ENCODE measurements at regions of chr17 and their contacts with region 1.

Region 1: DNA sequence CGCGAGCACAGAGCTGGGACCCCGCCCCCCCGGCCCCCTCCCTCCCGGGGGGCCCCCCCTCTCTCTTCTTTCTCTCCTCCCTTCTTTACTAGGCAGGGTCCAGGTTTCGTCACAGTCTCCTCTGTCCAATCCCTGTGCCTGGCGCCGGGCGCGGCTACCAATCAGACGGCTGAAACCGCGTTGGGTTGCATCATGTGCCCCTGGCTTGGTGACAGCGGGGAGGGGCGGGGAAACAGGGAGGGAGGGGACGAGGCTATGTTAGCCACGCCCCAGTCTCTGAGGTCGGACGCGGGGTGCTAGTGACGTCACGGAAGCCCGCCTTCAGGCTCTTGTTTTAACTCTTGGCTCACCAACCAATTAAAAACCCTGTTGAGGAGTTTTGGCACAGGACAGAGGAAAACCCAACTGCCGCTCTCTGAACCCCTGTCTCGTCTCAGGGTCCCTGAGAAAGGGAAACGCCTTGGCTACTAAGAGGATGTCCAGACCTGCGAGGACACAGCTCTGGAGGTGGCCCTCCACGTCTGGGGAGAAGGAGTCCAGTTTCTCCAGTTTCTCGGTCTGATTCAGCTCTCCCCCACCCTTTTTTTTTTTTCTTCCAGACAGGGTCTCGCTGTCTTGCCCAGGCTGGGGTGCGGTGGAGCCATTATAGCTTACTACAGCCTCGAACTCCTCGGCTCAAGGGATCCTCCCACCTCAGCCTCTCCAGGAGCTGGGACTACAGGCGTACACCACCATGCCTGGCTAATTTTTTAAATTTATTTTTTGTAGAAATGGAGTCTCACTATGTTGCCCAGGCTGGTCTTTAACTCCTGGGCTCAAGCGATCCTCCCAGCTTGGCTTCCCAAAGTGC is 439 bp upstream of the PLEKHH3 start:
- DNase-seq: peak; percentile 100
- ATAC-seq: peak; percentile 68
- H3K4me3 Mint-ChIP-seq: peak overlapping the region; percentile 79
- H3K27ac Mint-ChIP-seq: peak overlapping the region; percentile 94
- H3K4me1 Mint-ChIP-seq: peaks cover 40% of the 10 kb centered on the region
- H3K27me3 Mint-ChIP-seq: peaks cover 8% of the 10 kb centered on the region
- CTCF ChIP-seq: no peak

Region 2: DNA sequence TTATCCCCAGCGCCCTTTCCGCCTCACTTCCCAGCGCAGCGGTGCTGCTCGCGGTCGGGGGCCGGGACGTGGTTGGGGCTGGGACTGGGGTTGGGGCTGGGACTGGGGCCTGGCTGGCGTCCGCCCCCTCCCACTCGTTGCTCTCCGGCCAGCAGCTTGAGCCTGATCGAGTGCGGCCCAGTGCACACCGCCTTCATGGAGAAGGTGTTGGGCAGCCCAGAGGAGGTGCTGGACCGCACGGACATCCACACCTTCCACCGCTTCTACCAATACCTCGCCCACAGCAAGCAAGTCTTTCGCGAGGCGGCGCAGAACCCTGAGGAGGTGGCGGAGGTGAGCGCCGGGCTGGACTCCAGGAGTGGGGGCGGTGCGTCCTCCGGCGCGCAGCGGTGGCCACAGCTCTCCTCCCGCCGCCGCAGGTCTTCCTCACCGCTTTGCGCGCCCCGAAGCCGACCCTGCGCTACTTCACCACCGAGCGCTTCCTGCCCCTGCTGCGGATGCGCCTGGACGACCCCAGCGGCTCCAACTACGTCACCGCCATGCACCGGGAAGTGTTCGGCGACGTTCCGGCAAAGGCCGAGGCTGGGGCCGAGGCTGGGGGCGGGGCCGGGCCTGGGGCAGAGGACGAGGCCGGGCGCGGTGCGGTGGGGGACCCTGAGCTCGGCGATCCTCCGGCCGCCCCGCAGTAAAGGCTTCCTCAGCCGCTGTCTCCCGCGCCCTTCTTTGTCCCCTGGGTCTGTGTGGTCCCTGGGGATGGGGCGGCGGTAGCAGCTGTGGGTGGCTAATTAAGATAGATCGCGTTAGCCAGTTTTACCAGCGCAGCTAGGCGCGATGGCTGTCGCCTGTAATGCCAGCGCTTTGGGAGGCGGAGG is 122.7 kb before region 1 on chr17:
- CTCF ChIA-PET with region 1: interaction called, 19 read pairs
- POLR2A ChIA-PET with region 1: no interaction called
- DNase-seq: peak; percentile 93
- ATAC-seq: peak; percentile 81
- H3K4me3 Mint-ChIP-seq: peak overlapping the region; percentile 85
- H3K27ac Mint-ChIP-seq: peak overlapping the region; percentile 79
- H3K4me1 Mint-ChIP-seq: peaks cover 12% of the 10 kb centered on the region
- H3K27me3 Mint-ChIP-seq: no peaks in the 10 kb centered on the region
- CTCF ChIP-seq: no peak

Region 3: GRCh38 chr17:42618442-42619150 is 58.6 kb before region 1 on chr17:
- CTCF ChIA-PET with region 1: interaction called, 61 read pairs
- POLR2A ChIA-PET with region 1: interaction called, 5 read pairs
- DNase-seq: peak; percentile 70
- ATAC-seq: peak; percentile 97
- H3K4me3 Mint-ChIP-seq: no peak overlapping the region
- H3K27ac Mint-ChIP-seq: peak overlapping the region; percentile 14; the same call in 1 of the 2 replicates
- H3K4me1 Mint-ChIP-seq: peaks cover 12% of the 10 kb centered on the region
- H3K27me3 Mint-ChIP-seq: no peaks in the 10 kb centered on the region
- CTCF ChIP-seq: no peak

Region 4: GRCh38 chr17:42653179-42654124 is 23.8 kb before region 1 on chr17:
- CTCF ChIA-PET with region 1: interaction called, 44 read pairs
- POLR2A ChIA-PET with region 1: no interaction called
- DNase-seq: peak; percentile 59
- ATAC-seq: peak; percentile 79
- H3K4me3 Mint-ChIP-seq: peak overlapping the region; percentile 64
- H3K27ac Mint-ChIP-seq: 0 out of 2 replicates have a peak overlapping the region, but pooled peaks have one; percentile 3
- H3K4me1 Mint-ChIP-seq: peaks cover 10% of the 10 kb centered on the region
- H3K27me3 Mint-ChIP-seq: peaks cover 5% of the 10 kb centered on the region
- CTCF ChIP-seq: no peak

Region 5: GRCh38 chr17:42723636-42724035 is 46.4 kb after region 1 on chr17:
- CTCF ChIA-PET with region 1: no interaction called
- POLR2A ChIA-PET with region 1: no interaction called
- DNase-seq: no peak
- ATAC-seq: no peak
- H3K4me3 Mint-ChIP-seq: no peak overlapping the region
- H3K27ac Mint-ChIP-seq: no peak overlapping the region
- H3K4me1 Mint-ChIP-seq: no peaks in the 10 kb centered on the region
- H3K27me3 Mint-ChIP-seq: no peaks in the 10 kb centered on the region
- CTCF ChIP-seq: no peak

Region 6: DNA sequence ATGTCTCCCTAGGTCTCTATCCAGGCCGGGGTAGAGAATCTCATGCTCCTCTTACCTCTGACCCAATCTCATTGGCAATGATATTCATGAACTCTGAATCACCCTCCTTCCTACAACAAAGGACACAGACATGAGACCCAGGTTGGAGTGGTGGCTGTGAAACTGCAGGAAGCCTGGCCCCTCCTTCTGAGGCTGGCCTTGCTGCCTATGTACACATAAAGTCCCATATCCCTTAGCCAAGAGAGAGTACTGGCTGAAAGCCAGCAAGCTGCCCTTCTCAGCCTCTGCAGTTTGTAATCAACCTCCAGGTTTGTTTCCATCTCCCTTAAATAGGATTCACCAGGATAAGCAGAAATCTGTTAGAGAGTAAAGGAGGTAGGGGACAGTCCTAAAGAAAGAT is 276.4 kb after region 1 on chr17:
- CTCF ChIA-PET with region 1: no interaction called
- POLR2A ChIA-PET with region 1: no interaction called
- DNase-seq: no peak
- ATAC-seq: no peak
- H3K4me3 Mint-ChIP-seq: no peak overlapping the region
- H3K27ac Mint-ChIP-seq: no peak overlapping the region
- H3K4me1 Mint-ChIP-seq: no peaks in the 10 kb centered on the region
- H3K27me3 Mint-ChIP-seq: no peaks in the 10 kb centered on the region
- CTCF ChIP-seq: no peak

Measured in WTC11 (cell line).